GM12878 (cell line): ENCODE measurements at regions of chr7 and their contacts with region 1.

Region 1: DNA sequence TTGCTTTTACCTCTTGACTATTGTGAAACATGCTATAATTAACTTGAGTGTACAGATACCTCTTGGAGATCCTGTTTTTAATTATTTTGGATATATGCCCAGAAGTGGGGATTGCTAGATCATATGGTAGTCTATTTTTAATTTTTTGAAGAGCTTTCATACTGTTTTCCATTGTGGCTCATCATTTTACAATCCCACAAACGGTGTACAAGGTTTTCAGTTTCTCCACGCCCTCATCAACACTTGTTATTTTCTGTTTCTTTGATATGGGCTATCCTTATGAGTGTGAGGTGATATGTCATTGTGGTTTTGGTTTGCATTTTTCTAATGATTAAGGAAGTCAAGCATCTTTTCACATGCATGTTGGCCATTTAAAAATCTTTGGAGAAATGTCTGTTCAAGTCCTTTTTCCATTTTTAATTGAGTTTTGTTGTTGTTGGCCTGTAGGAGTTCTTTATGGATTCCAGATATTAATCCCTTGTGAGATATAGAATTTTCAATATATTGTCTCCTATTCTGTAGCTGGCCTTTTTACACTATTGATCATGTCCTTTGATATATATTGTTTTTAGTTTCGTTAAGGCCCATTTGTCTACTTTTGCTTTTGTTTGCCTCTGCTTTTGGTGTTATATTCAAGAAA is 7.5 kb downstream of the AGK start:
- DNase-seq: peak; percentile 69
- ATAC-seq: peak; percentile 92
- H3K4me3 ChIP-seq: no peak overlapping the region
- H3K27ac ChIP-seq: peak overlapping the region; percentile 74
- H3K4me1 ChIP-seq: peaks cover 26% of the 10 kb centered on the region
- H3K27me3 ChIP-seq: no peaks in the 10 kb centered on the region
- CTCF ChIP-seq: no peak
- EP300 ChIP-seq: peak; percentile 93 to 96
- POLR2A ChIP-seq: no peak
- RAD21 ChIP-seq: no peak

Region 2: GRCh38 chr7:141039376-141039775 is 519.3 kb before region 1 on chr7:
- CTCF ChIA-PET with region 1: no interaction called
- POLR2A ChIA-PET with region 1: interaction called, 12 read pairs
- RAD21 ChIA-PET with region 1: no interaction called
- SMC1A ChIA-PET with region 1: no interaction called
- in situ Hi-C with region 1: no loop called
- intact Hi-C with region 1: no loop called
- DNase-seq: no peak
- ATAC-seq: no peak
- H3K4me3 ChIP-seq: no peak overlapping the region
- H3K27ac ChIP-seq: no peak overlapping the region
- H3K4me1 ChIP-seq: no peaks in the 10 kb centered on the region
- H3K27me3 ChIP-seq: no peaks in the 10 kb centered on the region
- CTCF ChIP-seq: no peak
- EP300 ChIP-seq: no peak
- POLR2A ChIP-seq: no peak
- RAD21 ChIP-seq: no peak

Region 3: GRCh38 chr7:141597966-141598365 is 39.3 kb after region 1 on chr7:
- CTCF ChIA-PET with region 1: no interaction called
- POLR2A ChIA-PET with region 1: no interaction called
- RAD21 ChIA-PET with region 1: no interaction called
- SMC1A ChIA-PET with region 1: interaction called, 3 read pairs
- in situ Hi-C with region 1: no loop called
- intact Hi-C with region 1: loop called (anchors 5 kb)
- DNase-seq: no peak
- ATAC-seq: no peak
- H3K4me3 ChIP-seq: no peak overlapping the region
- H3K27ac ChIP-seq: no peak overlapping the region
- H3K4me1 ChIP-seq: peaks cover 4% of the 10 kb centered on the region; the same call in 1 of the 2 replicates
- H3K27me3 ChIP-seq: no peaks in the 10 kb centered on the region
- CTCF ChIP-seq: no peak
- EP300 ChIP-seq: no peak
- POLR2A ChIP-seq: no peak
- RAD21 ChIP-seq: no peak